Endothelial cell of umbilical vein (primary cell): ENCODE measurements at regions of chr4 and their contacts with region 1.

Region 1: DNA sequence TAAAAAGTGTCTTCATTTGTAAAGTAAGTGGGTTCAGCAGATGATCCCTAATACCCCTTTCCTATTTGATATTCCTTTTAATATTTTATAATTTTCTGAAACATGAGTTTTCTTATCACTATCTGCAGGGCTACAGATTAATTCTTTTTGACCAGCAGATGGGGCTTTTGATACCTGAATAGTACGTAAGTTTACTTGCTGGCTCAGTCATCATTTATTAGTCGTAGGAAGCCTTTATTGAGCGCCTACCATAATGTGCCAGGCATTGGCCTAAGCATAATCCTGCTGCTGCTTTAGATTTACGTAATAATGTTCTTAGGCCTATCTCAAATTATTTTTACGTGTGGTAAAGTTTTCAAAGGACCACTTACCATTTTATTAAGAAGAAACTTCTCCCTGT is 33.1 kb downstream of the OSTC start:
- DNase-seq: peak; percentile 51
- H3K4me3 ChIP-seq: no peak overlapping the region
- H3K27ac ChIP-seq: no peak overlapping the region
- H3K4me1 ChIP-seq: peaks cover 4% of the 10 kb centered on the region
- H3K27me3 ChIP-seq: no peaks in the 10 kb centered on the region
- CTCF ChIP-seq: peak in 1 of 2 donors; percentile 24
- POLR2A ChIP-seq: no peak

Region 2: GRCh38 chr4:108783665-108784463 is 100.4 kb after region 1 on chr4:
- CTCF ChIA-PET with region 1: interaction called, 32 read pairs
- POLR2A ChIA-PET with region 1: no interaction called
- dilution Hi-C with region 1: no loop called
- intact Hi-C with region 1: loop called (anchors 1 kb)
- DNase-seq: peak; percentile 18
- H3K4me3 ChIP-seq: no peak overlapping the region
- H3K27ac ChIP-seq: no peak overlapping the region
- H3K4me1 ChIP-seq: peaks cover 5% of the 10 kb centered on the region
- H3K27me3 ChIP-seq: no peaks in the 10 kb centered on the region
- CTCF ChIP-seq: no peak
- POLR2A ChIP-seq: no peak

Region 3: DNA sequence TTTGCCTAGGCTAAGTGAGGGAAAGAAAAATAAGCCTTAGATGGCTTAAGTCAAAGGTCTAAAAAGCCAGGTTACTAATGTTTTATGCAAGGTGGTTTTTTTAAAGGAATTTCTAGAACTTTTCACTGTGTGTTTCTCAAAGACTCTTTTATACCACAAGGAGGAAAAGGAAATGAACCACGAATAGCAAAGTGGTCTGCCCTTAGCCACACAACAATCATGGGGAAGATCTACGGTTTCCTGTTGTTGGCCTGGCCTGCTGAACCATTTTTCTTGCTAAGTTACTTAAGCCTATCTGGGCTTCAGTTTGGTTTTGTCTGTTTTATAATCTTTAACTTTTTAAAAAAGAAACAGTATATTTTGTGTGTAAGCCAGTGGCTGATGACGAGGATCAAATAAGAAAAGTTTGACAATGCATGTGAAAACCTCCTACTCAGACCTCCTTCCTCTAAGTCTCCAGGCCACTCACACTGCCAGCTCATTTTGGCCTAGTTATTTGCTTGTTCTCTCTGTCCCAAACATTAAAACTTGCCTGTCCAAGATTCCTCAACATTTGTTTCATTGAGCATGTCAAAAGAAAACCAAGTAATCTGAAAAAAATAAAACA is 675.7 kb after region 1 on chr4:
- CTCF ChIA-PET with region 1: no interaction called
- POLR2A ChIA-PET with region 1: no interaction called
- dilution Hi-C with region 1: no loop called
- intact Hi-C with region 1: no loop called
- DNase-seq: peak; percentile 60
- H3K4me3 ChIP-seq: no peak overlapping the region
- H3K27ac ChIP-seq: no peak overlapping the region
- H3K4me1 ChIP-seq: peaks cover 15% of the 10 kb centered on the region
- H3K27me3 ChIP-seq: no peaks in the 10 kb centered on the region
- CTCF ChIP-seq: no peak
- POLR2A ChIP-seq: no peak

Region 4: GRCh38 chr4:109406338-109406931 is 723.0 kb after region 1 on chr4:
- CTCF ChIA-PET with region 1: interaction called, 29 read pairs
- POLR2A ChIA-PET with region 1: no interaction called
- dilution Hi-C with region 1: no loop called
- intact Hi-C with region 1: loop called (anchors 1 kb)
- DNase-seq: peak; percentile 75
- H3K4me3 ChIP-seq: no peak overlapping the region
- H3K27ac ChIP-seq: no peak overlapping the region
- H3K4me1 ChIP-seq: no peaks in the 10 kb centered on the region
- H3K27me3 ChIP-seq: no peaks in the 10 kb centered on the region
- CTCF ChIP-seq: peak; percentile 51 to 53
- POLR2A ChIP-seq: no peak